ENCODE measurements at regions of chr2 and their contacts with region 1.

Region 1: GRCh38 chr2:157291009-157291408 is 33.5 kb downstream of the GALNT5 start:
- DNase-seq: peak in 1 of 2 experiments; percentile 30
- H3K4me3 ChIP-seq: no peak overlapping the region
- H3K4me3 Mint-ChIP-seq: no peak overlapping the region
- H3K27ac Mint-ChIP-seq: no peak overlapping the region
- H3K4me1 ChIP-seq: peaks cover 36% of the 10 kb centered on the region
- H3K4me1 Mint-ChIP-seq: peaks cover 28% of the 10 kb centered on the region
- H3K27me3 ChIP-seq: no peaks in the 10 kb centered on the region
- H3K27me3 Mint-ChIP-seq: no peaks in the 10 kb centered on the region
- CTCF ChIP-seq: no peak

Region 2: GRCh38 chr2:157245846-157246764 is 44.9 kb before region 1 on chr2:
- CTCF ChIA-PET with region 1: no interaction called
- POLR2A ChIA-PET with region 1: no interaction called
- intact Hi-C with region 1: loop called (anchors 1 kb)
- DNase-seq: no peak
- H3K4me3 ChIP-seq: no peak overlapping the region
- H3K4me3 Mint-ChIP-seq: peak overlapping the region; percentile 26
- H3K27ac Mint-ChIP-seq: peak overlapping the region; percentile 76
- H3K4me1 ChIP-seq: peaks cover 23% of the 10 kb centered on the region
- H3K4me1 Mint-ChIP-seq: peaks cover 20% of the 10 kb centered on the region
- H3K27me3 ChIP-seq: no peaks in the 10 kb centered on the region
- H3K27me3 Mint-ChIP-seq: no peaks in the 10 kb centered on the region
- CTCF ChIP-seq: no peak

Region 3: DNA sequence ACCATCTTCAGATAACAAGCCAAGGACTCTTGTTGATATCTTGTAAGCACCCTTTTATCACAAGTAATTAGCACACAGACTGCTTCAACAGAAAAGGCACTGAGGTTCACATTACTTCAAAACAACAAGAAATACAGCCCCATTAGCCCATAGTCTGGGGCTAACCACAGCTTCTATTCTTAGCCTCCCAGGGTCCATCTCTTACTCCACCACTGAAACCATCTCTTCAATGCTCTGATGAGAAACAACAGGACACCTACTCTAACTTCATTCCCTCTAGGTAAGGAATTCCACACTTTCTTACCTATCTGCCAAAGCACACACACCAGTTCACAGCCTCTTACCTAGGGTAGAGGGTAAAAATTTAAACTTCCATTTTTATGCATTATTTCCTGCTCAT is 179.3 kb after region 1 on chr2:
- CTCF ChIA-PET with region 1: no interaction called
- POLR2A ChIA-PET with region 1: no interaction called
- intact Hi-C with region 1: no loop called
- DNase-seq: no peak
- H3K4me3 ChIP-seq: no peak overlapping the region
- H3K4me3 Mint-ChIP-seq: no peak overlapping the region
- H3K27ac Mint-ChIP-seq: no peak overlapping the region
- H3K4me1 ChIP-seq: no peaks in the 10 kb centered on the region
- H3K4me1 Mint-ChIP-seq: no peaks in the 10 kb centered on the region
- H3K27me3 ChIP-seq: no peaks in the 10 kb centered on the region
- H3K27me3 Mint-ChIP-seq: no peaks in the 10 kb centered on the region
- CTCF ChIP-seq: no peak

Region 4: DNA sequence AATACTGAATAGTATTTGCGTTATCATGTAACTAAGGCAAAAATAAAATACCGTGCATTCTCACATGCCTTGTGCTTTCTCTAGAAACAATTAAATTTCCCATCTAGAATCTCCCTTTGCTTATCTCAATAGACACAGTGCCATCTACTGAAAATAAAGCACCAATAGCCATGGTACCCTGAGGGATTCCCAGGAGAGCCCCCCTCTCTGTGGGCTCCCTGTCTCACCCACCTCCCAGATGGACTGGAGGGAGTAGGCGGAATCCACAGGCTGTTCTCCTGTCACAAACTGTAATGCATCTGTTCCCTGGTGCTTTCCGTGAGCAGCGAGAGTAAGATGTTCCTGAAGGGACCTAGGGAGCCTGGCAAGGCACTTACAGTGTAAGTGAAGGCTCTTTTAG is 698.2 kb after region 1 on chr2:
- CTCF ChIA-PET with region 1: no interaction called
- POLR2A ChIA-PET with region 1: no interaction called
- intact Hi-C with region 1: no loop called
- DNase-seq: no peak
- H3K4me3 ChIP-seq: no peak overlapping the region
- H3K4me3 Mint-ChIP-seq: no peak overlapping the region
- H3K27ac Mint-ChIP-seq: no peak overlapping the region
- H3K4me1 ChIP-seq: no peaks in the 10 kb centered on the region
- H3K4me1 Mint-ChIP-seq: no peaks in the 10 kb centered on the region
- H3K27me3 ChIP-seq: no peaks in the 10 kb centered on the region; the same call in 1 of the 2 replicates
- H3K27me3 Mint-ChIP-seq: peaks cover 9% of the 10 kb centered on the region
- CTCF ChIP-seq: peak in 1 of 2 experiments; percentile 7